Prostate gland (tissue), 2 donors: ENCODE measurements at regions of chr1 and their contacts with region 1.

Region 1: GRCh38 chr1:226827968-226828513 is 42.4 kb upstream of the PSEN2 start:
- DNase-seq: peak; percentile 93
- H3K4me3 ChIP-seq: no peak overlapping the region
- H3K27ac ChIP-seq: peak overlapping the region in 1 of 2 donors; percentile 31
- H3K4me1 ChIP-seq: no peaks in the 10 kb centered on the region
- H3K27me3 ChIP-seq: no peaks in the 10 kb centered on the region
- CTCF ChIP-seq: peak; percentile 88 to 94 (median 92)
- POLR2A ChIP-seq: no peak

Region 2: DNA sequence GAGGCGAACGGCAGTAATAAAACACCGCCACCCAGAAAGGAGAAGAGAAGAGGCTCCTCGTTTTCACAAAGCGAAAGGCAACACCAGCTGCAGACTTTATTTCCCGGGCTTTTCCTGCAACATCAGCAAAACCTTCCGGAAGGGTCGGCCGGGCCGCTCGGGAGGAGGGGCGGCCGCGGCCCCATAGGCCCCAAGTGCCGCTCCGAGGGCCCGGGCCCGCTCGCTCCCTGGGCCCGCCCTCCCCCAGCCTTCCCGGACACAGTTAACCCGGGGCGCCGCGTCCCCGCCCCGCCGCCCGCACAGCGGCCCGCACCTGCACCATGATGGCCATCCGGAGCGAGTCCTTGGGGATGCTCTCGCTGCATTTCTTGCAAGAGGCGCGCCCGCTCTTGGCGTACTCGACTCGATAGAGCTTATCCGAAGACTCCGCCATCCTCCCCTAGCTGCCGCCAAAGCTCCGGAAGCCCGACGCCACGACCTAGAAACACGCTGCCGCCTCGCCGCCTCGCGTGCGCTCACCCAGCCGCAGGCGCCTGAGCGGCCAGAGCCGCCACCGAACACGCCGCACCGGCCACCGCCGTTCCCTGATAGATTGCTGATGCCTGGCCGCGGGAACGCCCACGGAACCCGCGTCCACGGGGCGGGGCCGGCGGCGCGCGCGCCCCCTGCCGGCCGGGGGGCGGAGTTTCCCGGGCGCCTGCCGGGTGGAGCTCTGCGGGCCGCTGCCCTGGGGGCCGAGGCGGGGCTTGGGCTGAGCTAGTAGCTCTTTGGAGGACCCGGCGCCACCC is 420.4 kb before region 1 on chr1 and contains the start of gene PARP1:
- intact Hi-C with region 1: loop called (anchors 10 kb)
- DNase-seq: peak; percentile 87
- H3K4me3 ChIP-seq: peak within 1 kb of the TSS; percentile 77 to 79
- H3K27ac ChIP-seq: peak within 1 kb of the TSS; percentile 84 to 89
- H3K4me1 ChIP-seq: peaks cover 12% of the 10 kb centered on the region
- H3K27me3 ChIP-seq: no peaks in the 10 kb centered on the region
- CTCF ChIP-seq: peak; percentile 92 to 96 (median 94)
- POLR2A ChIP-seq: peak; percentile 89
- total RNA-seq, gene PARP1: 197 to 212 TPM

Region 3: DNA sequence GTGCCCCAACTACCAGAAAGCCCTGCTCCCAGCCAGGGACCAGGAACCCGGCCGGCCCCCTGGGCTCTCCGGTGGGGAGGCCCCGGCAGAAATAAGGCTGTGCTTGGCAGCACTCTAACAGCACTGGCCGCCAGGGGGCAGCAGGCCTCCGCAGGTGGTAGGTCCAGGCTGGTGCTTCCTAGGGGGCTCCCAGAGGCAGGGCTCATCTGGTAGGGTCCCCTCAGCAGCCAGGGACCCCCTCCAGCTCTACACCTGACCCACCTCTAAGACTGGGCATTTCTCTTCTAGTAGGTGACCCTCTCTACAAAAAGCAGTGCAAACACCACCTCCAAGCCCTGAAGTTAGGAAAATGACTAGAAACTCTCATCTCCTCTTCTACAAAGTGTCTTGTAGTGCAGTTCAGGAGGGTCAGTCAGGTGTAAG is 193.9 kb before region 1 on chr1:
- intact Hi-C with region 1: loop called (anchors 1 kb)
- DNase-seq: peak; percentile 79
- H3K4me3 ChIP-seq: no peak overlapping the region
- H3K27ac ChIP-seq: peak overlapping the region; percentile 26 to 47
- H3K4me1 ChIP-seq: peaks cover 18% of the 10 kb centered on the region
- H3K27me3 ChIP-seq: no peaks in the 10 kb centered on the region
- CTCF ChIP-seq: peak; percentile 90 to 96 (median 94)
- POLR2A ChIP-seq: no peak

Region 4: GRCh38 chr1:226691247-226691646 is 136.8 kb before region 1 on chr1:
- intact Hi-C with region 1: no loop called
- DNase-seq: no peak
- H3K4me3 ChIP-seq: no peak overlapping the region
- H3K27ac ChIP-seq: peak overlapping the region; percentile 54 to 69
- H3K4me1 ChIP-seq: peaks cover 2% of the 10 kb centered on the region
- H3K27me3 ChIP-seq: no peaks in the 10 kb centered on the region
- CTCF ChIP-seq: no peak
- POLR2A ChIP-seq: no peak

Region 5: GRCh38 chr1:226702957-226703831 is 124.8 kb before region 1 on chr1:
- intact Hi-C with region 1: loop called (anchors 10 kb)
- DNase-seq: peak; percentile 85
- H3K4me3 ChIP-seq: peak overlapping the region; percentile 53 to 63
- H3K27ac ChIP-seq: peak overlapping the region; percentile 97 to 99
- H3K4me1 ChIP-seq: peaks cover 36% of the 10 kb centered on the region
- H3K27me3 ChIP-seq: no peaks in the 10 kb centered on the region
- CTCF ChIP-seq: peak in 1 of 4 experiments; percentile 10
- POLR2A ChIP-seq: peak; percentile 82

Region 6: GRCh38 chr1:227072991-227073390 is 244.9 kb after region 1 on chr1:
- intact Hi-C with region 1: no loop called
- DNase-seq: no peak
- H3K4me3 ChIP-seq: no peak overlapping the region
- H3K27ac ChIP-seq: no peak overlapping the region
- H3K4me1 ChIP-seq: no peaks in the 10 kb centered on the region
- H3K27me3 ChIP-seq: no peaks in the 10 kb centered on the region
- CTCF ChIP-seq: no peak
- POLR2A ChIP-seq: no peak